Activated B cell treated with CpG ODN at 0.5 μM for 24 hours (primary cell): ENCODE measurements at regions of chrX and their contacts with region 1.

Region 1: GRCh38 chrX:8815464-8816065 is 14.4 kb upstream of the FAM9A start:
- DNase-seq: no peak
- ATAC-seq: no peak
- H3K4me3 Mint-ChIP-seq: no peak overlapping the region
- H3K27ac Mint-ChIP-seq: no peak overlapping the region
- H3K4me1 Mint-ChIP-seq: no peaks in the 10 kb centered on the region
- H3K27me3 Mint-ChIP-seq: peaks cover 3% of the 10 kb centered on the region
- CTCF ChIP-seq: no peak

Region 2: GRCh38 chrX:7996414-7996813 is 819.2 kb before region 1 on chrX:
- CTCF ChIA-PET with region 1: no interaction called
- POLR2A ChIA-PET with region 1: no interaction called
- intact Hi-C with region 1: loop called (anchors 2 kb)
- DNase-seq: no peak
- ATAC-seq: peak; percentile 34
- H3K4me3 Mint-ChIP-seq: no peak overlapping the region
- H3K27ac Mint-ChIP-seq: no peak overlapping the region
- H3K4me1 Mint-ChIP-seq: no peaks in the 10 kb centered on the region
- H3K27me3 Mint-ChIP-seq: no peaks in the 10 kb centered on the region
- CTCF ChIP-seq: no peak

Region 3: DNA sequence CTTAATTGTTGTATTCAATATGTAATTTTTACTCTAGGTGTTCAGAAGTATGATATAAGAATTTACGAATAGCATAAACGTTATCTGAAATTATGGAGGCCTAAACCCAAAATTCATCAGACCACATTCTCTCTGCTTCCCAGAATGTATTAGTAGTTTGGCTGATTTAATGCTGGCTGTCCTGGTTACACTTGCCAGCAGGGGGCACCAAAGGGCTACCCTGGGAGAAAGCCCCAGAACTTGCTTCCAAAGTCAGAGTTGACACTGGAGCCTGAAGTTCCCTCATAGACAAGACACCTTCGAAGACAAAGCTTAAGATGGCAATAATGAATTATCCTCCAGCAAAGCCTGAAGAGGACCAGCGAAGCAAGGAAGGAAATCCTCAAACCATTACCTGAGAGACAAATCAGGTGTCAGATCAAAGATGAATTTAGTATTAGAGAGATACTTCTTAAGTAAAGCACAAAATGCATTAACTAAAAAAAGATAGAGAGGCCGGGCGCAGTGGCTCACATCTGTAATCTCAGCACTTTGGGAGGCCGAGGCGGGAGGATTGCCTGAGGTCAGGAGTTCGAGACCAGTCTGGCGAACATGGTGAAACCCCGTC is 72.3 kb before region 1 on chrX:
- CTCF ChIA-PET with region 1: no interaction called
- POLR2A ChIA-PET with region 1: no interaction called
- intact Hi-C with region 1: loop called (anchors 2 kb)
- DNase-seq: peak; percentile 27
- ATAC-seq: no peak
- H3K4me3 Mint-ChIP-seq: no peak overlapping the region
- H3K27ac Mint-ChIP-seq: no peak overlapping the region
- H3K4me1 Mint-ChIP-seq: no peaks in the 10 kb centered on the region
- H3K27me3 Mint-ChIP-seq: no peaks in the 10 kb centered on the region
- CTCF ChIP-seq: no peak

Region 4: GRCh38 chrX:9501362-9501761 is 685.8 kb after region 1 on chrX:
- CTCF ChIA-PET with region 1: interaction called, 4 read pairs
- POLR2A ChIA-PET with region 1: no interaction called
- intact Hi-C with region 1: loop called (anchors 5 kb)
- DNase-seq: no peak
- ATAC-seq: no peak
- H3K4me3 Mint-ChIP-seq: no peak overlapping the region
- H3K27ac Mint-ChIP-seq: no peak overlapping the region
- H3K4me1 Mint-ChIP-seq: peaks cover 16% of the 10 kb centered on the region
- H3K27me3 Mint-ChIP-seq: no peaks in the 10 kb centered on the region
- CTCF ChIP-seq: no peak

Region 5: DNA sequence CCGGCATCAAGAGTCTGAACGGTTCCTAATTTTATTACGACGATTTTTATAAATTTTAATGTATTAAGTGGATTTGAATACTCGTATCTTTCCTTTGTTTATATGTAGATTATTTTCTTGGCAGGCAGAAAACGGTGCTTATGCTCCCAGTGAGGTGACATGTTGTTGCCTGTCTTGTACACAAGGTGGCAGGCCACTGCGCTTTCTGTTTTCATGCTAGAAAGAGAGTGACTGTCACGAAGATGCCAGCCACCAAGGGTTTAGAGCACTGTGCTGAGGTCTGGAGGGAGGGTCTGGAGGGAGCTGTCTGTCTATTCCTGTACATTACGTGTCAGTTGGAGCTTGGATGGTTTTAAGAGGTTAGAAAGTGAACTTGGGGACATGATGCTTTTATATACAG is 1058.4 kb after region 1 on chrX:
- CTCF ChIA-PET with region 1: no interaction called
- POLR2A ChIA-PET with region 1: no interaction called
- intact Hi-C with region 1: loop called (anchors 5 kb)
- DNase-seq: peak; percentile 16
- ATAC-seq: peak; percentile 72
- H3K4me3 Mint-ChIP-seq: no peak overlapping the region
- H3K27ac Mint-ChIP-seq: no peak overlapping the region
- H3K4me1 Mint-ChIP-seq: peaks cover 2% of the 10 kb centered on the region
- H3K27me3 Mint-ChIP-seq: peaks cover 9% of the 10 kb centered on the region
- CTCF ChIP-seq: no peak

Region 6: DNA sequence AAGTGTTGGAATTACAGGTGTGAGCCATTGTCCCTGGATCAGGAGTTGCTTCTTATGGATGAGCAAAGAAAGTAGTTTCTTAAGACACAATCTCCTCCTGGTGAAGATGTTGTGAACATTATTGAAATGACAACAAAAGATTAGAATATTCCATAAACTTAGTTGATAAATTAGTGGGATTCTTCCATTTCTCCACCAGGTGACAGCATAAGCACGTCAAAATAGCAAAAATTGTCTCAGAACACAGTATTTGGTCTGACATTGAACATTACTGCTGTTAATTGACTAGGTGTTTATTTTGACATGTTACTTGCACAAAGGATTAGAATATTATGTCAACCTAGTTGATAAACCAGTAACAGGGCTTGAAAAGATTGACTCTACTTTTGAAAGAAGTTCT is 1173.2 kb after region 1 on chrX:
- CTCF ChIA-PET with region 1: no interaction called
- POLR2A ChIA-PET with region 1: no interaction called
- intact Hi-C with region 1: loop called (anchors 5 kb)
- DNase-seq: no peak
- ATAC-seq: no peak
- H3K4me3 Mint-ChIP-seq: no peak overlapping the region
- H3K27ac Mint-ChIP-seq: no peak overlapping the region
- H3K4me1 Mint-ChIP-seq: peaks cover 17% of the 10 kb centered on the region
- H3K27me3 Mint-ChIP-seq: no peaks in the 10 kb centered on the region
- CTCF ChIP-seq: no peak